ENCODE measurements at regions of chr5 and their contacts with region 1.

Region 1: DNA sequence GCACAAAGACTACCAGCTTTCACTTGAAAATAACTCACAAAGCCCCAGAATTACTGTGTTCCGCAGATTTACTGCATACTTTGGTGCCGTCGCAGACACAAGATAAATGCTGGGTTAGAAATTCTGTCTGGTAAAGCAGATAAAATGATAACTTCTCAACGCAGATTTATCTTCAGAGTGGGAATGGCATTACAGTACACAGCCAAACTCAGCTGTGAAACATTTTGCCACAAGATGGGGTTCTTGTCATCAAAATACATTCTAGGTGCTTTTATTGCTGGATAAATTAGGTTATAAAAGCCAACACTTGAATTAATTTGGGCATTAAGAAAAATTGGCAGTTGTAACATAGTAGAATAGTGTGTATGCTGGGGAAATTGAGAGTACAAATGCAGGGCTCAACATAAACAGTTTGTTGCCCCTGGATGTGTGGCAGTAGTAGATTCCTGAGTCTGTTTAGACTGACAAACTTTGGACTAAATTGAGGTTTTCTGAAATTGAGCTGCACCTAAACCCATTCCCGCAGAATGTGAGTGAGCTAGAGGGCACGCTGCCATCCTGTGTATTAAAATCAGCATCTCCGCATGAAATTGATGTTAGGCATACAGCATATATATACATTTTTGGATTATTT is 61.1 kb downstream of the LMNB1 start:
- DNase-seq: no peak
- ATAC-seq: peak; percentile 48
- H3K4me3 ChIP-seq: no peak overlapping the region
- H3K27ac ChIP-seq: no peak overlapping the region
- H3K4me1 ChIP-seq: no peaks in the 10 kb centered on the region
- H3K27me3 ChIP-seq: no peaks in the 10 kb centered on the region

Region 2: GRCh38 chr5:127313847-127314473 is 475.9 kb after region 1 on chr5:
- intact Hi-C with region 1: loop called (anchors 5 kb)
- DNase-seq: peak; percentile 61 to 87
- ATAC-seq: no peak
- H3K4me3 ChIP-seq: no peak overlapping the region
- H3K27ac ChIP-seq: no peak overlapping the region
- H3K4me1 ChIP-seq: no peaks in the 10 kb centered on the region
- H3K27me3 ChIP-seq: no peaks in the 10 kb centered on the region

Region 3: GRCh38 chr5:127492854-127493738 is 655.1 kb after region 1 on chr5:
- intact Hi-C with region 1: loop called in 1 of 2 experiments (anchors 5 kb)
- DNase-seq: no peak
- ATAC-seq: no peak
- H3K4me3 ChIP-seq: no peak overlapping the region
- H3K27ac ChIP-seq: no peak overlapping the region
- H3K4me1 ChIP-seq: no peaks in the 10 kb centered on the region
- H3K27me3 ChIP-seq: no peaks in the 10 kb centered on the region